ENCODE measurements at regions of chr2 and their contacts with region 1.

Region 1: DNA sequence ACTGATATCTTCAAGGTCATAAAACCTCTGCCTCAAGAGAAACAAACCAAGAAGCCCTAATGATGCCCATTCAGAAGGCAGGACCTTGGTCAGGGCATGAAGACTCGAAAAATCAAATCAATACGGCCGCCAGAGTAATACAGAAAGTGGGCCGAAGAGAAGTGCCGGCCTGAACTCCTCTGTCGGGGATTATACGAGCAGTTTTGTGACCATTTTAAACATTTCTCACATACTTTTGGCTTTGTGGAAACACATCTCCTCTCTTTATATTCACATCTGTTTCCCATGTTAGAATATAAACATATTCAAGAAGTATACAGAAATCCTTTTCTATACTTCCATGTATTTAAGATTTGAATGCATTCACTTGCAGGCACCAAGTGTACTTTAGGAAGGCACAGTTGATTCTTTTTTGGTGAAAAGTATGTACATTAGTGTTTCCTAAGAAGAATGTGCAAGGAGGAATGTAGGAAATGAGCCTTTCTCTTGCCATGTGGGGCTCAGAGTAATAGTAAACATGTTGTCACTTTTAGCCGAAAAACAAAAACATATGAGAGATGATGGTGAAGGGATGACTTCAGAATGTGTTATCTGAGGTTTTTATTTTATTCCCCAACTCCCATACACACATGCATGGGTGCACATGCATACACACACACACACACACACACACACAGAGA is 707.9 kb upstream of the ID2 start:
- DNase-seq: no peak
- H3K4me3 Mint-ChIP-seq: no peak overlapping the region
- H3K27ac Mint-ChIP-seq: no peak overlapping the region
- H3K4me1 Mint-ChIP-seq: peaks cover 7% of the 10 kb centered on the region
- H3K27me3 Mint-ChIP-seq: peaks cover 4% of the 10 kb centered on the region

Region 2: GRCh38 chr2:7999683-8000476 is 25.9 kb after region 1 on chr2:
- CTCF ChIA-PET with region 1: interaction called, 4 read pairs
- POLR2A ChIA-PET with region 1: no interaction called
- intact Hi-C with region 1: loop called (anchors 2 kb)
- DNase-seq: no peak
- H3K4me3 Mint-ChIP-seq: no peak overlapping the region
- H3K27ac Mint-ChIP-seq: no peak overlapping the region
- H3K4me1 Mint-ChIP-seq: peaks cover 12% of the 10 kb centered on the region
- H3K27me3 Mint-ChIP-seq: no peaks in the 10 kb centered on the region

Region 3: GRCh38 chr2:8030573-8031303 is 56.8 kb after region 1 on chr2:
- CTCF ChIA-PET with region 1: no interaction called
- POLR2A ChIA-PET with region 1: no interaction called
- intact Hi-C with region 1: no loop called
- DNase-seq: no peak
- H3K4me3 Mint-ChIP-seq: no peak overlapping the region
- H3K27ac Mint-ChIP-seq: no peak overlapping the region
- H3K4me1 Mint-ChIP-seq: peaks cover 11% of the 10 kb centered on the region
- H3K27me3 Mint-ChIP-seq: peaks cover 3% of the 10 kb centered on the region